Ascending aorta (tissue), 2 donors: ENCODE measurements at regions of chr20 and their contacts with region 1.

Region 1: GRCh38 chr20:44738813-44739477 is 6.7 kb upstream of the KCNK15 start:
- DNase-seq: peak in 1 of 2 donors; percentile 89
- H3K4me3 ChIP-seq: no peak overlapping the region
- H3K27ac ChIP-seq: peak overlapping the region; percentile 73 to 94
- H3K4me1 ChIP-seq: peaks cover 5 to 45% of the 10 kb centered on the region in 2 donors
- H3K27me3 ChIP-seq: no peaks in the 10 kb centered on the region
- CTCF ChIP-seq: no peak

Region 2: DNA sequence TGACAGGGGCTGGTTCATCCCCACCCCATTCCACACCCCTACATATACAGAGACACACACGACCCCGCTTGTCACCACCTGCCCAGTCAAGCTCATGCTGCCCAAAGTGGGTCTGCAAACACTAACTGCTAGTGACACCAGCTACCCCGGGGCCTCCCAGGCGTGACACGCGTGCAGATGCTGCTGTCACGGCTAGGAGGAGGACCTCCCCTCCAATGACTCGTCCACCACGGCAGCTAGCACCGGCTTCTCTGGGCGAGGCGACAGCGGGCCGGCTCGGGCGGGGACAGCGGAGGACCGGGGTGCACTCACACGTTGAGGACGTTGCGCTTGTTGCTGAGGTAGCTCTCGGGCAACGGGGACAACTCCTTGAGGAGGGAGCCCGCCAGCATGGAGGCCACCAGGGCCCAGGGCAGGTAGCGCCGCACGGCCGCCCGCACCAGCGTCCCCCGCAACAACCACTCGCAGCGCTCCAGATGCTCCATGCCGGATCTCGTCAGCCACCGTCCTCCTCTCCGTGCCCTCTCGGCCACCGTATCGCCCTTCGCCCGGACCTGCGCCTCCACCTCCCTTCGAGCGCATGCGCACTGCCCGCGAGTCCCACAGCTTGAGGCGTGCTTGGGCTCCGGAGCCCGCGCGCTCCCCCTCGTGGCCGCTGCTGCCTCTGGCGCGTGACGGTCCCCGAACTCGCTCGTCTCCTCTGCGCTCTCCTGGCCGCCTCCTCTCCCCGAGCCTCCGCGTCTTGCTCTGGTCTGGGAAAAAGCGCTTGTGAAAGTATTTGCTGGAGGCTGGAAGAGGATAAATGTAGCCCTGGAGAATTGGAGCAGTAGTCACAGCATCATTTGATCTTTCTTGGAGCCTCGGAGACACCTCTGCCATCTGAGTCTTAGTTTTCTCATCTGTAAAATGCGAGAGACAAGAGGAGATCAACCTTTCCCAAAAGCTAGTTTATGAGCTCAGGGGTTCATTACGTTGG is 428.0 kb before region 1 on chr20 and contains the start of gene FITM2:
- intact Hi-C with region 1: no loop called
- DNase-seq: peak; percentile 89 to 99
- H3K4me3 ChIP-seq: peak within 1 kb of the TSS; percentile 85 to 100
- H3K27ac ChIP-seq: peak within 1 kb of the TSS; percentile 50 to 68
- H3K4me1 ChIP-seq: peaks cover 4 to 9% of the 10 kb centered on the region in 2 donors
- H3K27me3 ChIP-seq: no peaks in the 10 kb centered on the region
- CTCF ChIP-seq: peak; percentile 87 to 98 (median 96)
- total RNA-seq, gene FITM2: 5.3 TPM

Region 3: DNA sequence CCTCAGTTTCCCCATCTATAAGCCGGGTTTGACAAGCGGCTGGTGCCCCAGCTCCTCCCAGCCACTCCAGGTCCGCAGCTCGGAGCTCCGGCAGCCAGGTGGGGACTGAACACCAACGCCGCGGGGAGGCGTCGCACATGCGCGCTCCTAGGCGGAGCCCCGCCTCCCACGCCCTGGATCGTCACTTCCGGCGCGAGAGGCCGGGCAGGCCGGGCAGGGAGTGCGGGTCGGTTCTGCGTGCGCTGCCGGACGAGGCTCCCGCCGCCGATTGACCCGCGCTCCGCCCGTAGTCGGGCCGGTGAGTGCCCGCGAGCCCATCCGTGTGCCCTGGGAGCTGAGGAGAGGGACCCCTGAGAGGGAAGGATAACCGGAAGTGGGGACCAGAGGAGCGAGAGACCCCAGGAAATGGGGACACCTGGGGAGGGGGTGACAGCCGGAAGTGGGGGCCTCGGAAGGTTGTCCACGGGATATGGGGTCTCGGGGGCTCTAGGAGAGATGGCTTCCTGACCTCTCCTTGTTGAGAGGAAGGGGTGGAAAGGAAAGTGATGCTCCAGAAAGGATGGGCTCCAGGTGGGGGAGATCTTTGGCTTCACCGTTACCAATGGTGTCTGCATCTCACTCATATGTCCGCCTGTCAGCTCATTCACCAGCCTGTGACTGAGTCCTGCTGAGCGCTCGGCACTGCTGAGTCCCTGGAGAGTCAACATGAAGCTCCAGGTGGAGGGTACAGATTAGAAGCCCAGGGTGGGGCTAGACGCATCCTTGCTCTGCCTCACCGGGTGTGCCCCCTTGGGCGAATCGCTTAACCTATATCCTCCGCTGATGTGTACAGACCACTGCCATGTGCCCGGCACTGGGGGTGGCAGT is 263.0 kb before region 1 on chr20 and contains the start of gene TTPAL:
- intact Hi-C with region 1: loop called (anchors 5 kb)
- DNase-seq: peak; percentile 50 to 94
- H3K4me3 ChIP-seq: peak within 1 kb of the TSS; percentile 74 to 84
- H3K27ac ChIP-seq: peak within 1 kb of the TSS; percentile 94 to 97
- H3K4me1 ChIP-seq: peaks cover 5 to 6% of the 10 kb centered on the region in 2 donors
- H3K27me3 ChIP-seq: no peaks in the 10 kb centered on the region
- CTCF ChIP-seq: peak in 2 of 3 experiments; percentile 25 to 60
- total RNA-seq, gene TTPAL: 44.9 TPM

Region 4: DNA sequence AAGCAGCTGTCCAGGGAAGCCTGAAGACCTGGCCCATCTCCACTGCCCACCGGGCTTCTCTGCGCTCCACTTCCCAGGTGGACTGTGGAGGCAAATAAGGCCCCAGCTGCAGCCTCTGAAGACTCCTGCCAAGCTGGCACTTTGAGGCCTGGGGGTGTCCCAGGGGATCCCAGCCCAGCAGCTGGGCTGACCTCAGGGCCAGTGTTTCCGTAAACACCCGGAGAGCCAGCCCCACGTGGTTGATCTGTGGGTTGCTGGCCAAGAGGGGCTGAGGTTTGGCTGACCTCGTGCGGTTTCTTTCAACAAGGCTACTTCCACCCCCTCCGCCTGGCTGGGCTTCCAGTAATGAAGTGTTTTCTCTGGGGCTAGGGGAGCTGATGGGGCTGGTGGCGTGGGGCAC is 36.2 kb before region 1 on chr20:
- intact Hi-C with region 1: no loop called
- DNase-seq: peak; percentile 68 to 96
- H3K4me3 ChIP-seq: no peak overlapping the region
- H3K27ac ChIP-seq: peak overlapping the region; percentile 87 to 93
- H3K4me1 ChIP-seq: peaks cover 13 to 50% of the 10 kb centered on the region in 2 donors
- H3K27me3 ChIP-seq: no peaks in the 10 kb centered on the region
- CTCF ChIP-seq: no peak

Region 5: DNA sequence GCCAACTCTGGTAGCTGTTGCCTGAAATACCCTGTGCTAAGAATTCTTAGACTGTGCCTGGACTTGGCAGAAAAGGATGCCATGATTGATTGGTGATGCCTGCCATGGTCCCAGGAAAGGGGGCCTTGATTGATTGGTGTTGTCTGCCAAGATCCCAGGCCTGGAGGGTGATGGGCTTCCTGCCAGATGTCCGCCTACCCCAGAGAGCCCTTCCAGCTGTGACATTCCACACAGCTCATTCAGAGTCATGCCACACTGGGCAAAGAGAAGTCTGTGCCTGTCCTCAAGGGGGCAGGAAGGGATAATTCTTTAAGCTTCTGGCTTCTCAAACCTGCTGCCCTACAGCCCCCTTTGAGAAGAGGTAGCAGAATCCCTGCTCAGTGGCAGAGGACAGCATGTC is 46.8 kb after region 1 on chr20:
- intact Hi-C with region 1: no loop called
- DNase-seq: no peak
- H3K4me3 ChIP-seq: no peak overlapping the region
- H3K27ac ChIP-seq: no peak overlapping the region
- H3K4me1 ChIP-seq: peaks cover 0 to 9% of the 10 kb centered on the region in 2 donors
- H3K27me3 ChIP-seq: no peaks in the 10 kb centered on the region
- CTCF ChIP-seq: peak in 1 of 3 experiments; percentile 40